ENCODE measurements at regions of chr12 and their contacts with region 1.

Region 1: GRCh38 chr12:69929125-69929524 is 104.1 kb downstream of the MYRFL start:
- DNase-seq: no peak
- H3K4me3 ChIP-seq: no peak overlapping the region
- H3K27ac ChIP-seq: no peak overlapping the region
- H3K4me1 ChIP-seq: peaks cover 33% of the 10 kb centered on the region
- CTCF ChIP-seq: no peak

Region 2: GRCh38 chr12:70748809-70749208 is 819.7 kb after region 1 on chr12:
- CTCF ChIA-PET with region 1: no interaction called
- POLR2A ChIA-PET with region 1: interaction called, 10 read pairs
- intact Hi-C with region 1: no loop called
- DNase-seq: no peak
- H3K4me3 ChIP-seq: no peak overlapping the region
- H3K27ac ChIP-seq: no peak overlapping the region
- H3K4me1 ChIP-seq: no peaks in the 10 kb centered on the region
- CTCF ChIP-seq: no peak